Activated T-helper 1 cell treated with anti-CD3 and anti-CD28 coated beads, Interleukin-12 subunit alpha, Interleukin-12 subunit beta, Interleukin-2, Interleukin-4 antibody, amounts not matched to agents 30 ng/mL and 10 ng/mL and 1 ng/mL, durations not matched to agents 14 hours and 24 hours and 36 hours (primary cell): ENCODE measurements at regions of chr14 and their contacts with region 1.

Region 1: GRCh38 chr14:76784266-76785264 is 23.3 kb downstream of the VASH1 start:
- DNase-seq: peak; percentile 33
- H3K4me3 Mint-ChIP-seq: no peak overlapping the region
- H3K27ac Mint-ChIP-seq: no peak overlapping the region
- H3K4me1 Mint-ChIP-seq: peaks cover 49% of the 10 kb centered on the region
- H3K27me3 Mint-ChIP-seq: no peaks in the 10 kb centered on the region

Region 2: DNA sequence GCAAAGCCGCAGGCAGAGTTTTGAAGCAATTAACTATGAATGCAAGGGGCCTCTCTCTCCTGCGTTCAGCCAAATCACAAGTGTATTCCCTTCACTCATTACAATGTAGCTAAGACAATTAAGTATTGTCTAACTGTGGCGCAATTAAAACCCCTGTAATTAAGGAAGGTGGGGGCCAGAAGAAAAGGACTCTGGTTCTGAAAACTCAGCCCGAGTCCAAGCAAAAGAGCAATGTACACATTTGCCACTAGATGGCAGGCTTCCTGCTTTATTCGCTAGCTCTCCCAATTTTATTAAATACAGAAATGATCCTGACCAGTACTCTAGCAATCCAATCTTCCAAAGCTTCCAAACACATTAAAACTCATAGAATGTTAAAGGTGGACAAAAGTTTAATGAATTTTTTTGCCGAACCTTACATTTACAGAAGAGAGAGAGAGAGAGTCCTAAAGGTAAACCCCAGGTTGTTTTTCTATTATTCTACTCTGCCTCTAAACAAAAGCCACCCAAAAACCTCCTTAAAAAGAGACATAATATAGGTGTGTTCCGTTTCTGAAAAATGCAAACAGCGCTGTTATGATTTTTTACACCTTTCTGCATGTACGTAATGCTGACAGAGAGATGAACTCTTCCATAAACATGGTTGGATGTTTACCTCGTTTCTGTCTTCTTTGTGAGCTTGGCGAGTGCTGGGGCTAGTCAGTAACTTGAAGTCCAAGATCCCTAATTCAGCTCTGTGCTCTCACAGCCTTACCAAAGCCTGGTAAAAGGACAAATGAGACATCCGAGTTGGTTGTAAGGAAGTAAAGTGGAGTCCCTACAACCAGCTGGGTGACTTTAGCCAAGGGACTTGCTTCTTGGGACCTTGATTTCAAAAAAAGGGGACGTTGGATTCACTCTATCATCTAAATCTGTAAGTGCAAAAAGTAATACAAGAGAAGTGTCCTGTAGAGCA is 74.2 kb before region 1 on chr14:
- intact Hi-C with region 1: loop called (anchors 1 kb)
- DNase-seq: no peak
- H3K4me3 Mint-ChIP-seq: no peak overlapping the region
- H3K27ac Mint-ChIP-seq: no peak overlapping the region
- H3K4me1 Mint-ChIP-seq: no peaks in the 10 kb centered on the region
- H3K27me3 Mint-ChIP-seq: peaks cover 14% of the 10 kb centered on the region

Region 3: GRCh38 chr14:76767681-76768656 is 16.6 kb before region 1 on chr14:
- intact Hi-C with region 1: loop called (anchors 1 kb)
- DNase-seq: peak; percentile 74
- H3K4me3 Mint-ChIP-seq: peak overlapping the region; percentile 42
- H3K27ac Mint-ChIP-seq: peak overlapping the region; percentile 79
- H3K4me1 Mint-ChIP-seq: peaks cover 30% of the 10 kb centered on the region
- H3K27me3 Mint-ChIP-seq: peaks cover 26% of the 10 kb centered on the region